Endothelial cell of umbilical vein (primary cell): ENCODE measurements at regions of chr6 and their contacts with region 1.

Region 1: DNA sequence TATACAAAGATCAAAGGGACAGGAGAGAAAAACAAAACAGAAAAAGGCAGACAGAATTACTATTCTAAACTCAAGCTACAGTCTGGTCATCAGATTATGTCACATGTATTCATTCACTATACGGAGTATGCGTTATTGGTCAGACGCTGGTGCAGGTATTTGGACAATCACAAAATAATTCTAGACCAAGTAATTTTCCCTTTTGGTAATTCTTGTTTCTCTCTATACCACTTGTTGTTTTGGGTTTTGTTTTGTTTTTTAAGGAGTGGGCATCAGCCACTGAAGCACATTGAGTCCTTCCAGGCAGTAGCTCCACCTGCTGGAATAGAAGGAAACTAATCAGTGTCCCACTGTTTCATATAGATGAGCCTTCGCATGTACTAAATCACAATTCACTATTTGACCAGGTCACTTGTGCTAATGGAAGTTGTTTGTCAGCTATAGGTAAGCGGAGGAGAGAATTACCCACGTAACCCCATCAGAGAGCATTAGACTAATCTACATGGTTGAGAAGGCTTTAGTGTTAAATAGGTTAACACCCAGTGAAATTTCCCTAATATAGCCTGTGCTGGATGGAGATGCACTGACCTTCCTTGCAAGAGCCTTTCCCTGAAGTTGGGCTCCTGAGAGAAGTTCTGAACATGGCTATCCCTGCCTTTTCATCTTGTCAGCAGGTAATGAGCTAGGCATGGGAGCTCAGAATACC is 77.9 kb downstream of the TNFAIP3 start:
- DNase-seq: peak; percentile 56
- H3K4me3 ChIP-seq: no peak overlapping the region
- H3K27ac ChIP-seq: no peak overlapping the region
- H3K4me1 ChIP-seq: no peaks in the 10 kb centered on the region
- H3K27me3 ChIP-seq: no peaks in the 10 kb centered on the region
- CTCF ChIP-seq: peak; percentile 58 to 59
- POLR2A ChIP-seq: no peak

Region 2: DNA sequence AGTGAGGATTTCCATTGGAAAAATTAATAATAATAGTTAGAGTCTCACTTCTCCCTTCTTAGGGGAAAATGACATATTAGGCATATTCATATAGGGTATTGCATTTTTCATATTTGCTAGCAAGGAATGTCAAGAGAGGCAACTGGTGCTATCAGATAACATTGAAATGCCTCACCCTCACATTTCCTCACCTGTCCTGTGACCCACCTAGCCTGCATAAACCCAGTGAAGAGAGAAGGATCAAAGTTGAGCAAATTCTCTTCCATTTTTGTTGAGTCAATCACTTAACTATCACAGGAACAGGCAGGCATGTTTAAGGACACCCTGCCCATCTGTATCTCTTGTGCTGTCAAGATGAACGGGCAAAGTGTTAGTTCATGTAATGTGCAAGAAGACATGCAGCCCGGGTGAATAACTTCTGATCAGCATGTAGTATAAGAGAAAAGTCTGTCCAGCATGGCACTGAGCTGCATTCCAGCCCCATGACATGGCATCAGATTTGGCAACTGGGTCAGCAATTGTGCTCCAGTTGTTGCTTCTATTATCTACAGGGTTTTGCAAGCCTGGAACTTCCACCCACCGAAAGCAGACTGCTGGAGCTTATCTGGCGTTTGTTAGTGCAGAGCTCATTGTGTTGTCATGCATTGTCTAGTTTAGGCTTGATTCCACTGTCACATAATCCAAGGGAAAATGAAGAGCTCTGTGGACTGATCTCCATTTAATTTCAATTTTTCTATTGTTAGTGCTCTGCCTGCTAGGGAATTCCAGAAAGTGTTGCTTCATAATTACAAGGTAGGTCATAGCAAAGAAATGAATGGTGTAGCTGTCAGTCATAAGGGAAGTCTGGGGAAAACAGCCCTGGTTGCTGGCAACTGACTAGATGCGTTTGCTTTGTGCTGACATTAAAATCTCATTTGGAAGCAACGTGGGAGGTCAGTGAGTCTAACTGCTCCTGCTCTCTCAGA is 216.3 kb before region 1 on chr6:
- CTCF ChIA-PET with region 1: interaction called, 3 read pairs
- POLR2A ChIA-PET with region 1: no interaction called
- dilution Hi-C with region 1: loop called (anchors 25 kb)
- intact Hi-C with region 1: no loop called
- DNase-seq: peak; percentile 31
- H3K4me3 ChIP-seq: no peak overlapping the region
- H3K27ac ChIP-seq: no peak overlapping the region
- H3K4me1 ChIP-seq: peaks cover 9% of the 10 kb centered on the region
- H3K27me3 ChIP-seq: no peaks in the 10 kb centered on the region
- CTCF ChIP-seq: no peak
- POLR2A ChIP-seq: no peak

Region 3: DNA sequence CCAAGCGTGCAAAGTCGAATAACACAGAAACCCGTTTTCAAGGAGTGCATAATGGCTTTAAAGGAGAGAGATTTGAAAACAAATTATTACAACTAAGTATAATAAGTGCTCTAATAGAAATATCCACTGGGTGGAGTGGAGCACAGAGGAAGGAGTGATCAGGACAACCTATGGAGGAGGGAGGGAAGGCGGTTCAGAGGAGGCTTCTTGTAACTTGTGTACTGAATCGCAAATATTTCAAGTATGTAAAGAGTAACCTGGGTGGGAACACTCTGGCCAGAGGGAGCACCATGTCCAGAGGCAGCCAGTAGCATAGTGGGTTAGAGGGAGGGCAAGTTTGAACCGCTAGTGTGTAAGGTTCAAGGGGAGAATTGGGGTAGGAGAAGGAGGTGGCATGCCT is 99.5 kb before region 1 on chr6:
- CTCF ChIA-PET with region 1: no interaction called
- POLR2A ChIA-PET with region 1: interaction called, 3 read pairs
- dilution Hi-C with region 1: no loop called
- intact Hi-C with region 1: loop called (anchors 1 kb)
- DNase-seq: no peak
- H3K4me3 ChIP-seq: no peak overlapping the region
- H3K27ac ChIP-seq: no peak overlapping the region
- H3K4me1 ChIP-seq: no peaks in the 10 kb centered on the region
- H3K27me3 ChIP-seq: no peaks in the 10 kb centered on the region
- CTCF ChIP-seq: no peak
- POLR2A ChIP-seq: no peak

Region 4: DNA sequence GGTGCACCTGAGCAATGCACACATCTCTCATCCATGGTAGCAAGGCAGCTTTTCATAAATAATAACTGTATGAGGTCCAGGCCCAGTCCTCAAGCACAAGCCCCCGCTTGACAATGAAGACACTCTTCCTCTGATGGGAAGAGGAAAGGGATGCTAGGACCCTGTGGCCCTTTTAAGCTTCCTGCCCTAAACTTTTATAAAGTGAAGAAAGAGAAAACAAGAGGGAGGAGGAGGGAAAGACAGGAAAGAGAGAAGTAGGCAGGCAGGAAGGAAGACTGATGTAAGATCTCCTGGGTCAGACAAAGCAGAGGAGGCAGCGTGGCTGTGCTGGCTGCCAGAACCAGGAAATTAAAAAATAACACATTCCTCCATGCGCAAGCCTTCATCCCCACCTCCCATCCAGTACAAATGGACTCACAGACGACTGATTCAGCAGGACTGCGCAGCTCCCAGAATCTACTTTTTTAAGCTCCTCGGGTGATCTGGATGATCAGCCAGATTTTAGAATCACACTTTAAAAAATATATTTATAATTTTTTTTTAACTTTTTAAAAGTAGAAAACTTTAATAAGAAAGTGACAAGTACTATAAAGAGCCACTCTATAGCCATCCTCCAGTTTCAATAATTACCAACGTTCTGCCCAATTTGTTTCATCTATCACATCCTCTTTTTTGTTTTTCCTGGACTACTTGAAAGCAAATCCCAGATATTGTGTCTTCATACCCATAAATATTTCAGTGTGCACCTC is 61.4 kb before region 1 on chr6:
- CTCF ChIA-PET with region 1: interaction called, 12 read pairs
- POLR2A ChIA-PET with region 1: no interaction called
- dilution Hi-C with region 1: no loop called
- intact Hi-C with region 1: no loop called
- DNase-seq: peak; percentile 79
- H3K4me3 ChIP-seq: no peak overlapping the region
- H3K27ac ChIP-seq: peak overlapping the region; percentile 72
- H3K4me1 ChIP-seq: peaks cover 16% of the 10 kb centered on the region
- H3K27me3 ChIP-seq: no peaks in the 10 kb centered on the region
- CTCF ChIP-seq: no peak
- POLR2A ChIP-seq: peak; percentile 54

Region 5: DNA sequence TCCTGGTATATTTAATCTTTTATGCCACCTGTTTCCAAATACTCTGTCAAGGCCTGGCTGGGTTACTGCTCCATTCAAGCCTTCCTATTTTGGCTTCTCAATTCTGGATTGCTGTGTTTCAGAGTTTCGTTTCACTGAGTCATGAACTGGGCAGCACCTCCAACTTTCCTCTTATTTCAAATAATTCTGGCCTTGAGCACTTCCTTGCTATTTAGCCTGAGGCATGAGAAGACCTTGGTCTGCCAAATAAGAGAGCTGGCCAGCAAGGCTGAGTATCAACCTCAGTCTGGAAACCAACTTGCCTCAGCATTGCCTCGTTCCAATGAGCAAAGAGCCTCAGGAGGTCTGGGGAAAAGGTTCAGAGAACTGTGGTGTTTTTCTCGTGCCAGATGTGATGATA is 11.2 kb before region 1 on chr6:
- CTCF ChIA-PET with region 1: interaction called, 16 read pairs
- POLR2A ChIA-PET with region 1: no interaction called
- dilution Hi-C with region 1: no loop called
- intact Hi-C with region 1: no loop called
- DNase-seq: no peak
- H3K4me3 ChIP-seq: no peak overlapping the region
- H3K27ac ChIP-seq: no peak overlapping the region
- H3K4me1 ChIP-seq: no peaks in the 10 kb centered on the region
- H3K27me3 ChIP-seq: no peaks in the 10 kb centered on the region
- CTCF ChIP-seq: no peak
- POLR2A ChIP-seq: no peak

Region 6: GRCh38 chr6:139568956-139569548 is 1624.1 kb after region 1 on chr6:
- CTCF ChIA-PET with region 1: no interaction called
- POLR2A ChIA-PET with region 1: no interaction called
- dilution Hi-C with region 1: no loop called
- intact Hi-C with region 1: no loop called
- DNase-seq: peak; percentile 80
- H3K4me3 ChIP-seq: peak overlapping the region in 1 of 3 experiments; percentile 22
- H3K27ac ChIP-seq: peak overlapping the region; percentile 81
- H3K4me1 ChIP-seq: peaks cover 24% of the 10 kb centered on the region
- H3K27me3 ChIP-seq: no peaks in the 10 kb centered on the region
- CTCF ChIP-seq: no peak
- POLR2A ChIP-seq: no peak